HepG2 (cell line): ENCODE measurements at regions of chr9 and their contacts with region 1.

Region 1: GRCh38 chr9:130285216-130285615 is 19.7 kb downstream of the HMCN2 start:
- DNase-seq: no peak
- ATAC-seq: no peak
- H3K4me3 ChIP-seq: no peak overlapping the region
- H3K27ac ChIP-seq: no peak overlapping the region
- H3K4me1 ChIP-seq: no peaks in the 10 kb centered on the region
- H3K27me3 ChIP-seq: peaks cover 9 to 61% of the 10 kb centered on the region in 2 experiments; a peak in 4 of 5 replicates
- CTCF ChIP-seq: no peak
- EP300 ChIP-seq: no peak
- POLR2A ChIP-seq: no peak
- RAD21 ChIP-seq: no peak

Region 2: GRCh38 chr9:130308081-130308571 is 22.9 kb after region 1 on chr9:
- CTCF ChIA-PET with region 1: no interaction called
- POLR2A ChIA-PET with region 1: no interaction called
- in situ Hi-C with region 1: no loop called
- intact Hi-C with region 1: loop called (anchors 1 kb)
- DNase-seq: no peak
- ATAC-seq: no peak
- H3K4me3 ChIP-seq: no peak overlapping the region
- H3K27ac ChIP-seq: no peak overlapping the region
- H3K4me1 ChIP-seq: no peaks in the 10 kb centered on the region
- H3K27me3 ChIP-seq: peaks cover 4 to 31% of the 10 kb centered on the region in 2 experiments; a peak in 4 of 5 replicates
- CTCF ChIP-seq: no peak
- EP300 ChIP-seq: no peak
- POLR2A ChIP-seq: no peak
- RAD21 ChIP-seq: no peak